ENCODE measurements at regions of chr1 and their contacts with region 1.

Region 1: DNA sequence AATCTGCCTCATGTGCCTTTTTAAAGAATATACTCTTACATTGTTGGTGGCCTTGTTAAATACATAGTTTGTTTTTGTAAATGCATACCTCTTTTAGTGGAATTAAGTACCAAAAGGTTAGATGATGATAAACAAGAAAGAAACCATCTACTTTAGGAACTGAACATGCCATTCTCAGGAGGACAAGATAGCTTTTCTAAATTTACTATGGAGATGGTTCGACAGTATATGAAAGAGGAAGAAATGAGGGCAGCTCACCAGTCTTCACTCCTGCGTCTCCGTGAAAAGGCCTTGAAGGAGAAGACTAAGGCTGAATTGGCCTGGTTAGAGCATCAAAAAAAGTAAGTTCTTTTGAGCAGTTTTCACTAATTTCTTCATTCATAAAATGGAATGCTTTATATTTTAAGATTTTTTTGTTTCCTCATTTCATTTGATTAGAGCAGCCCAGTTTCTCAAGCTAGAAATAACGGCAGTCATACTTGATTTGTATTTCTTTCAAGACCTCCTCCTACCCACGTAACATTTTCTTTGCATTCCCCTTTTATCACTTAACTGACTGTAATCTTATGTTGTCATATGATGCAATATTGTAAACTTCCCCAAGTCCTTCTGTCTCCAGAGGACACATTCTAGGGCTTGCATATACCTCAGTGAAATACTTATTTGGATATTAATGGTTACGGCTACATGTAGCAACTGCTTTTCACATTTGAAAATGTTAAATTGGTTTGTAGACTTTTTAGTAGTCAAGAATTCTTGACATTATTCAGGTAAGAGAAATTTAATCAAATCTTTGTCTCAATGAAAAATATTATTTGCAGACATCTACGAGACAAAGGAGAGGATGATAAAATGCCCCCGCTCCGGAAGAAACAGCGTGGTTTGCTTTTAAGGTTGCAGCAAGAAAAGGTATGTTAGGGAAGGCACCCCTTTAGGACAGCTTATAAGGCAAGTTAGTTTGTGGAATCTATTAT is 99.3 kb downstream of the CEP350 start:
- DNase-seq: no peak
- H3K4me3 Mint-ChIP-seq: no peak overlapping the region
- H3K27ac Mint-ChIP-seq: no peak overlapping the region
- H3K4me1 Mint-ChIP-seq: peaks cover 5% of the 10 kb centered on the region
- H3K27me3 Mint-ChIP-seq: no peaks in the 10 kb centered on the region

Region 2: DNA sequence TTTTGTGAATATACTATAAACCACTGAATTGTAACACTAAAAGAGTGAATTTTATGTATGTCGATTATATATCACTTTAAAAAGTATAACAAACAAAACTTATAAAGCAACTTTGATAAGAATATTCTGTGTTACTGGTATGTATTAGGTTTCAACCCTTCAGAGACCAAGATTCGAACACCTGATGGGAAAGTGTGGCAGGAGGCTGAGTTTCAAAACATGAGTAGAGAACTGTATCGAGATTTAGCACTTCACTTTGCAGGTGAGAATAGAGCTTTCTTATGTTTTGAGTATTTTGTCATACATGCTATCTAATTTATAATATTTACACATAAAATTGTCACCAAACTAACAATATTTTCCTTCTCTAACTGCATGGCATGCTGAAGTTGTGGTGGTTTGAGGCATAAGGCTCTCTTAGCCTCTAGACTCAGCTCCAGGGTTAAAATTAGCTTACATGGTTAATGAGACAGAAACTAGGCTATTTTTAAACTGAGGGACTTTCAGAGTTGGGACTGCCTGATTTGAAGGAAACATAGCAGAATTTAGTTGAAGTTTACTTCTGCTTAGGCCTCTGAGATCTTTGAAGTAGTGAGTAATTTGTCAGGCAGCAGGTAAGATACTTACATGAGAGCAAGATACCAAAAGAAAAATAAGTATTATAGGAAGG is 50.7 kb before region 1 on chr1:
- CTCF ChIA-PET with region 1: no interaction called
- intact Hi-C with region 1: loop called (anchors 2 kb)
- DNase-seq: no peak
- H3K4me3 Mint-ChIP-seq: no peak overlapping the region
- H3K27ac Mint-ChIP-seq: peak overlapping the region; percentile 26
- H3K4me1 Mint-ChIP-seq: peaks cover 6% of the 10 kb centered on the region
- H3K27me3 Mint-ChIP-seq: no peaks in the 10 kb centered on the region

Region 3: DNA sequence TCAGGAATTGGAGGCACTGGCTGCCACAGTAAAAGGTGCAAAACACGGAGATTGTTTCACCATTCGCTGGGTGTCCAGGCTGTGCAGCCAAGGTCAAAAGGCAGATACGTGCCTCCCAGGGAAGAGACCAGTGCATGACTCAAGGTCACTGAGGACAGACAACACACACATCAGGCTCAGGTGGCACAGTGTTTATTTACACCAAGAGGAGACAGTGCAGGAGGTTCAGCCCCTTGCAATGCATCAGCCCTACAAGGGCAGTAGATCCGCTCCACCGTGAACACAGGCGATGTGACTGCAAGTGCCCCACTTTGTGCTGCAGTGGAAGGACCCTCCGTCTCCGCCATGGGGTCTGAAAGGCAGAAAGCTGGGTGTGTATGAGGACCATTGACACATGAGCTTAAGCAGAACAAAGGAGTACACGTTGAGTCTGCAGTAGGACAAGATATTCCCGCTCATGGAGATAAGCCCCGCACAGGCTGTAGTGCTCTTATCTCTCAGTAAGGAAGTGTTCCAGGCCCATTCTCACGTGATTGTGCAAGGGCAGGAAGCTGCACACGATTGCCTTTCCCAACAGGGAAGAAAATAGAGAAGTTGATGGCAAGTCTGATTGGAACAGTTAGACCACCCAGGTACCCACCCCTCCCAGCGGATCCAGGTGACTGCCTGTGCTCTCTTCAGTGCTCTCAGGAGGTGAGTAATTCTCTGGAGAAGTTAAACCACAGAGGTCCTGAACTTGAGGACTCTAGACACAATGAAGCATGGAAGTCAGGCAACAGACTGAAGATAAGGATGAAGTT is 63.3 kb after region 1 on chr1:
- CTCF ChIA-PET with region 1: no interaction called
- intact Hi-C with region 1: no loop called
- DNase-seq: no peak
- H3K4me3 Mint-ChIP-seq: no peak overlapping the region
- H3K27ac Mint-ChIP-seq: no peak overlapping the region
- H3K4me1 Mint-ChIP-seq: no peaks in the 10 kb centered on the region
- H3K27me3 Mint-ChIP-seq: no peaks in the 10 kb centered on the region